ENCODE measurements at regions of chr2 and their contacts with region 1.

Region 1: DNA sequence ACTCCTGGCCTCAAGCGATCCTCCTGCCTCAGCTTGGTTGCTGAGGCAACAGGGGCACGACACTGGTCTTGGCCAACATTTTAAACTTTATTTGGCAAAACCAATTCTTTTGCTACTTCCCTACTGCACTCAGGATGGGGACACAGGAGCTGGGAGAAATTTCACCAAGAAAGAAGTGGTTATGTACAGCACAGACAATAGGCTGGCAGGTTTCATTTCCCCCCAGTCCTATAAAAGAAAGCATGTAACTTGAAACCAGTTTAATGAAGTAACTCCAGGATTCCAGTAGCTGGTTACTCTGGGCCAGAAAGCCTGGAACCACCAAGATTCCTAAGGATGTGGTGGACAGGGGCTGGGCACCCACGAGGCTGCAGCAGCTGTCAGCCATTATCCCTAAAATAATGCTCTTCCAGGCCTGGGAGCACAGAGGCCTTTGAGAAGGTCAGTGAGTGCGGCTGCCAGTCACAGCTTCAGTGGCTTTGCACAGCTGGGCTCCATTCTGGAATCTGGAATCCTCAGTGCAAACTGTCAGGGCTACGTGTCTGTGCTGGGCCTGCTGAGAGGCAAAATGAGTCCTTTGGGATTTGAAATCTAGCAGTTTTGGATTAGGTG is 142.3 kb upstream of the ITGA6 start:
- DNase-seq: peak; percentile 75
- H3K4me3 ChIP-seq: no peak overlapping the region
- H3K27ac ChIP-seq: no peak overlapping the region
- H3K4me1 ChIP-seq: peaks cover 17% of the 10 kb centered on the region
- H3K27me3 ChIP-seq: no peaks in the 10 kb centered on the region
- CTCF ChIP-seq: no peak

Region 2: GRCh38 chr2:172233987-172234715 is 51.0 kb before region 1 on chr2:
- CTCF ChIA-PET with region 1: interaction called, 11 read pairs
- POLR2A ChIA-PET with region 1: no interaction called
- intact Hi-C with region 1: no loop called
- DNase-seq: no peak
- H3K4me3 ChIP-seq: peak overlapping the region; percentile 46
- H3K27ac ChIP-seq: no peak overlapping the region
- H3K4me1 ChIP-seq: no peaks in the 10 kb centered on the region
- H3K27me3 ChIP-seq: peaks cover 37% of the 10 kb centered on the region
- CTCF ChIP-seq: no peak

Region 3: GRCh38 chr2:173043476-173043875 is 758.4 kb after region 1 on chr2:
- CTCF ChIA-PET with region 1: no interaction called
- POLR2A ChIA-PET with region 1: no interaction called
- intact Hi-C with region 1: no loop called
- DNase-seq: no peak
- H3K4me3 ChIP-seq: no peak overlapping the region
- H3K27ac ChIP-seq: no peak overlapping the region
- H3K4me1 ChIP-seq: peaks cover 9% of the 10 kb centered on the region
- H3K27me3 ChIP-seq: no peaks in the 10 kb centered on the region
- CTCF ChIP-seq: no peak

Measured in A673 (cell line).